Mammary epithelial cell (primary cell): ENCODE measurements at regions of chr15 and their contacts with region 1.

Region 1: GRCh38 chr15:49235446-49236124 is 65.5 kb downstream of the GALK2 start:
- DNase-seq: peak; percentile 43
- H3K4me3 ChIP-seq: no peak overlapping the region
- H3K27ac ChIP-seq: no peak overlapping the region
- H3K4me1 ChIP-seq: no peaks in the 10 kb centered on the region
- H3K27me3 ChIP-seq: no peaks in the 10 kb centered on the region
- CTCF ChIP-seq: peak; percentile 79 to 82

Region 2: DNA sequence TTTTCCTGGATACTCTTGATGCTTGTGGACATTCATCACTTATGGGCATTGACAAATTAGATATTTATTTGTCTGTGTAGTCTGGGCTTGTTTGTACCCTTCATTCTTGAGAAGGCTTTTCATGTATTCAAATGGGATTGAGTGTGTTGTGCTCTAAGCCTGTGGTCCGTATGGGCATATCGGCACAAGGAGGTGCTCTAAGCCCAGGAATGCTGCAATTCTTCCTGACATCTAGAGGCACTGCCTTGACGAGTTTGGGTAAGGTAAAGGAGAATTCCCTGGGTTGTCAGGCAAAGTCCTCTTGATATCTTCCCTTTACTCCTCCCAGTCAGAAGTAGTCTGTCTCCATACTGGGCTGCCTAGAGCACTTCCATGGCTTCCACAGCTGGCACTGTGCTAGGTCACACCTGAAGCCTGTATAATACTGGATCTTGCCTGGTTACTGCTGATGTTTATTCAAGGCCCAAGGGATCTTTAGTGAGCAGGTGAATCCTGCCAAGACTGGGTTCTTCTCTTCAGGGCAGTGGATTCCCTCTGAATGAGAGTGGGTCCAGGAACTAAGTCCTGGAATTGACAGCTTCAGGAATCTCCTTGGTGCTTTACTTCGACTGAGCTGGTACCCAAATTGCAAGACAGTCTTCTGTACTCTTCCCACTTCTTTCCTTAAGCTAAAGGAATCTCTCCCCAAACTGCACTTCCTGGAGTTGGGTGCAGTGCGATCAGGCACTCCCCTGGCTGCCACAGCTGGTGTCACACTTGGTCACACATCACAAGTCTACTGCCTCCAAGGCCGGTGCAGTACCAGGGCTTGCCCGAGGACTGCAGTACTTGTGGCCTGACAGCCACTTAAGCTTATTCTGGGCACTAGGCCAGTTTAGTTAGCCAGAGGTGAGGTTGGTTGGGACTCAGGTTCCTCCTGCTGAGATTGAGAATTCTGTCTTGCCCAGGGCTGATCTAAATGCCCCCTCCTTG is 19.5 kb before region 1 on chr15:
- CTCF ChIA-PET with region 1: no interaction called
- dilution Hi-C with region 1: no loop called
- in situ Hi-C with region 1: no loop called
- intact Hi-C with region 1: no loop called
- DNase-seq: peak; percentile 20
- H3K4me3 ChIP-seq: no peak overlapping the region
- H3K27ac ChIP-seq: no peak overlapping the region
- H3K4me1 ChIP-seq: no peaks in the 10 kb centered on the region
- H3K27me3 ChIP-seq: no peaks in the 10 kb centered on the region
- CTCF ChIP-seq: peak in 1 of 2 donors; percentile 23

Region 3: GRCh38 chr15:49415638-49416037 is 180.1 kb after region 1 on chr15:
- CTCF ChIA-PET with region 1: no interaction called
- dilution Hi-C with region 1: no loop called
- in situ Hi-C with region 1: loop called (anchors 10 to 25 kb)
- intact Hi-C with region 1: no loop called
- DNase-seq: peak; percentile 82
- H3K4me3 ChIP-seq: no peak overlapping the region
- H3K27ac ChIP-seq: no peak overlapping the region
- H3K4me1 ChIP-seq: peaks cover 8% of the 10 kb centered on the region
- H3K27me3 ChIP-seq: no peaks in the 10 kb centered on the region
- CTCF ChIP-seq: no peak

Region 4: GRCh38 chr15:49421991-49422390 is 186.4 kb after region 1 on chr15:
- CTCF ChIA-PET with region 1: interaction called, 4 read pairs
- dilution Hi-C with region 1: no loop called
- in situ Hi-C with region 1: loop called (anchors 10 to 25 kb)
- intact Hi-C with region 1: loop called (anchors 1 kb)
- DNase-seq: peak; percentile 55
- H3K4me3 ChIP-seq: peak overlapping the region in 1 of 3 experiments; percentile 33
- H3K27ac ChIP-seq: no peak overlapping the region
- H3K4me1 ChIP-seq: no peaks in the 10 kb centered on the region
- H3K27me3 ChIP-seq: peaks cover 3% of the 10 kb centered on the region
- CTCF ChIP-seq: peak; percentile 75 to 85

Region 5: DNA sequence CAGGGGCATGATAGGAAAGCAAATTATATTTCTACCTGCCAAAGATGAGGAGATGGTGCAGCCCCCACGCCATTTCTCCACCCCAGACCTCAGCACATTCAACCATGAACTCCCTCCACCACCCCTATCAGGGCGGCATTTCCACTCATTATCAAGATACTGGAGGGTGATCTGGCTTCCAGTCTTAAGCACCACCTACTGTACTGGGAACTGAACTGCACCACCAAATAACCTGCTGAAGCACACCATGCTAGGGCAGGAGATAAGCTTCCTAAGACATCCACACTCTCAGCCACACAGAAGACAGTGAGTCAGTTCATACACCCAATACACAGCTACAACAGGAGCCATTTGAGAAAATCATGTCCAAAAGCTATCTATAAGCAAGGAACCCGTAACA is 286.2 kb after region 1 on chr15:
- CTCF ChIA-PET with region 1: no interaction called
- dilution Hi-C with region 1: no loop called
- in situ Hi-C with region 1: no loop called
- intact Hi-C with region 1: loop called (anchors 2 kb)
- DNase-seq: peak; percentile 29
- H3K4me3 ChIP-seq: no peak overlapping the region
- H3K27ac ChIP-seq: no peak overlapping the region
- H3K4me1 ChIP-seq: no peaks in the 10 kb centered on the region
- H3K27me3 ChIP-seq: no peaks in the 10 kb centered on the region
- CTCF ChIP-seq: peak; percentile 26 to 51

Region 6: DNA sequence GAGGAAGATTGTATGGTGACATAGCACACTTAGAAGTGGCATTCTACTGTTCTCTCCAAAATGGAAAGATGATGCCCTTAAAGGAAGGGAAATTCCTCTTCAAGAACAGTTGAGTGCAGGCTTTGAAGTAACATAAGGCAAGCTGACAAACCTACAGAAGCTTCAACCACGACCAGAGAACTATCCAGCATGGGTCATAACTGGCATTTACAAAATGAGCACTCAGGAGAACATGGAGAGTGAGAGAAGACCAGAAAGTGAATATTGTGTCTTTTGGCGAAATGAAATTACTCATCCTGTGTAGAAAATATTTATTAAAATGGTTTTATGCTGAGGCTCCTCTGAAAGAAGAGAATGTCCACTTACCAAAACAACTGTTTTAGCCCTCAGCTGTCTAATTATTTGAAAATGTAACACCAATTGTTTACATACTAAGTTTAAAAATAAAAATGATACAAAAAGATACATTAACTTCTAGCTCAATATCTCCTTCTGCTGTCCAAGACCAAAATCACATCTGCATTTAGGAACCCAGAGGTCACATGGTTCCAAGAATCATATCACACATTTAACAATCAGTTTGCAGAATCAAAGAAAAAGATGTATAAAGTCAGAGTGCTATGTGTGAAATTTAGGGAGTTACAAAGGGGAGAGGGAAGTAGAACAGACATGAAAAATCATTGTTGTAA is 666.6 kb after region 1 on chr15:
- CTCF ChIA-PET with region 1: no interaction called
- dilution Hi-C with region 1: no loop called
- in situ Hi-C with region 1: no loop called
- intact Hi-C with region 1: loop called (anchors 10 kb)
- DNase-seq: peak; percentile 5
- H3K4me3 ChIP-seq: no peak overlapping the region
- H3K27ac ChIP-seq: no peak overlapping the region
- H3K4me1 ChIP-seq: no peaks in the 10 kb centered on the region
- H3K27me3 ChIP-seq: no peaks in the 10 kb centered on the region
- CTCF ChIP-seq: peak; percentile 14 to 42

Region 7: DNA sequence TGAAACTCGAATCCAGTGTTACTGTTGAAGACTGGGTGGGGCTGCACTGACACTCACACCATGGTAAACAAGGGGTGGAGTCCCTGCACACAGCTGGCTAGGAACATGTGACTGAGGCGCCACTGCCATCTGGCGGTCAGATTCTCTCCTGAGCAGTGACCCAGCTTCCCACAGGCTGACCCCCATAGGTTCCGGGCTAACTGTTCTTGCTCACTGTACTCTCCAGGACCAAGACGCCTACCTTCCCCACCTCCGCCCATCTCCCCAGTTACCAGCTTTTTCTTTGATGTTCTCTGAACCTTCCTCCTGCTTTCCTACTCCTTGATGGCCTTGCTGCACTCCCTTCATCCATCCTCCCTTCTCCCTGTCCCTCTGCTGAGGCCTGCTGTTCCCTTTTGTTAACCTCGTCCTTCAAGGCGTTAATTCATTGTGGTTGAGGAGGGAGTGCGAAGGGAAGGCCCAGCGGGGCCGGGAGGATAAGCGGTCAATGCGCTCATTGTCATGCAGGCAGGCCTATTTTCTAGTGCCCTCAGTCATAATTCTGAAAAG is 768.3 kb after region 1 on chr15:
- CTCF ChIA-PET with region 1: no interaction called
- dilution Hi-C with region 1: no loop called
- in situ Hi-C with region 1: no loop called
- intact Hi-C with region 1: loop called (anchors 2 kb)
- DNase-seq: peak; percentile 70
- H3K4me3 ChIP-seq: no peak overlapping the region
- H3K27ac ChIP-seq: no peak overlapping the region
- H3K4me1 ChIP-seq: no peaks in the 10 kb centered on the region
- H3K27me3 ChIP-seq: no peaks in the 10 kb centered on the region
- CTCF ChIP-seq: peak; percentile 76 to 78

Region 8: GRCh38 chr15:50051803-50052419 is 816.3 kb after region 1 on chr15:
- CTCF ChIA-PET with region 1: no interaction called
- dilution Hi-C with region 1: no loop called
- in situ Hi-C with region 1: no loop called
- intact Hi-C with region 1: loop called (anchors 5 kb)
- DNase-seq: peak; percentile 67
- H3K4me3 ChIP-seq: no peak overlapping the region
- H3K27ac ChIP-seq: no peak overlapping the region
- H3K4me1 ChIP-seq: no peaks in the 10 kb centered on the region
- H3K27me3 ChIP-seq: no peaks in the 10 kb centered on the region
- CTCF ChIP-seq: peak; percentile 63 to 77